Heart right ventricle (tissue), 16 donors: ENCODE measurements at regions of chr1 and their contacts with region 1.

Region 1: DNA sequence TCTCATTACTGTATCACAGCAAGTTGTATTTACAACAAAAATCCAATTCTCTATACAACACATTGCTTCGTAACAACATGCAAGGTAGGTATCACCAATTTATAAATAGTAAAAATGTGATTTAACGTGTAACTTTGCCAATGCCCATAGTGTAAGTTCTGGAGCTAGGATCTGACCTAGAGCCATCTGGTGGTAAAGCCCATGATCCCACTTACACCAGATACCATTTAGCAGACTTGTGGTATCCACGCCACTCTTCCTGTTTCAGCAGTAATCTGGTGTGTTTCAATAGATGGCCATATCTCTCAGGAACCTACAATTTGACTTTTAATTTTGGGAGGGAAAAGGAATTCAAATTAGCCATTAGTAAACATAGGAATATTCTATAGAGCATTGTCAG is 10.2 kb downstream of the SETSIP start:
- DNase-seq: no peak
- ATAC-seq: no peak
- H3K4me3 ChIP-seq: no peak overlapping the region
- H3K27ac ChIP-seq: no peak overlapping the region
- H3K4me1 ChIP-seq: no peaks in the 10 kb centered on the region
- H3K27me3 ChIP-seq: no peaks in the 10 kb centered on the region
- CTCF ChIP-seq: no peak

Region 2: GRCh38 chr1:92123868-92124267 is 58.8 kb after region 1 on chr1:
- intact Hi-C with region 1: loop called in 1 of 10 experiments (anchors 10 kb)
- DNase-seq: no peak
- ATAC-seq: peak in 1 of 8 donors; percentile 58
- H3K4me3 ChIP-seq: no peak overlapping the region
- H3K27ac ChIP-seq: peak overlapping the region in 3 of 10 donors; percentile 4 to 51 (median 17)
- H3K4me1 ChIP-seq: peaks cover 0 to 13% (median 0%) of the 10 kb centered on the region in 9 donors
- H3K27me3 ChIP-seq: no peaks in the 10 kb centered on the region
- CTCF ChIP-seq: no peak